CD4-positive, alpha-beta T cell (primary cell): ENCODE measurements at regions of chr3 and their contacts with region 1.

Region 1: GRCh38 chr3:36911990-36912804 is 32.7 kb downstream of the TRANK1 start:
- DNase-seq: peak in 8 of 14 experiments; percentile 14 to 80 (median 41)
- ATAC-seq: peak; percentile 82
- H3K4me3 ChIP-seq: peak overlapping the region; percentile 41
- H3K4me3 Mint-ChIP-seq: peak overlapping the region; percentile 40
- H3K27ac ChIP-seq: peak overlapping the region; percentile 42 to 67
- H3K27ac Mint-ChIP-seq: peak overlapping the region; percentile 73
- H3K4me1 ChIP-seq: peaks cover 29% of the 10 kb centered on the region
- H3K4me1 Mint-ChIP-seq: peaks cover 39% of the 10 kb centered on the region
- H3K27me3 ChIP-seq: no peaks in the 10 kb centered on the region
- H3K27me3 Mint-ChIP-seq: no peaks in the 10 kb centered on the region
- CTCF ChIP-seq: no peak

Region 2: GRCh38 chr3:35484929-35485530 is 1427.2 kb before region 1 on chr3:
- CTCF ChIA-PET with region 1: no interaction called
- POLR2A ChIA-PET with region 1: no interaction called
- intact Hi-C with region 1: no loop called
- DNase-seq: no peak
- ATAC-seq: no peak
- H3K4me3 ChIP-seq: no peak overlapping the region
- H3K4me3 Mint-ChIP-seq: no peak overlapping the region
- H3K27ac ChIP-seq: no peak overlapping the region
- H3K27ac Mint-ChIP-seq: no peak overlapping the region
- H3K4me1 ChIP-seq: no peaks in the 10 kb centered on the region
- H3K4me1 Mint-ChIP-seq: no peaks in the 10 kb centered on the region
- H3K27me3 ChIP-seq: no peaks in the 10 kb centered on the region
- H3K27me3 Mint-ChIP-seq: peaks cover 3% of the 10 kb centered on the region
- CTCF ChIP-seq: no peak

Region 3: DNA sequence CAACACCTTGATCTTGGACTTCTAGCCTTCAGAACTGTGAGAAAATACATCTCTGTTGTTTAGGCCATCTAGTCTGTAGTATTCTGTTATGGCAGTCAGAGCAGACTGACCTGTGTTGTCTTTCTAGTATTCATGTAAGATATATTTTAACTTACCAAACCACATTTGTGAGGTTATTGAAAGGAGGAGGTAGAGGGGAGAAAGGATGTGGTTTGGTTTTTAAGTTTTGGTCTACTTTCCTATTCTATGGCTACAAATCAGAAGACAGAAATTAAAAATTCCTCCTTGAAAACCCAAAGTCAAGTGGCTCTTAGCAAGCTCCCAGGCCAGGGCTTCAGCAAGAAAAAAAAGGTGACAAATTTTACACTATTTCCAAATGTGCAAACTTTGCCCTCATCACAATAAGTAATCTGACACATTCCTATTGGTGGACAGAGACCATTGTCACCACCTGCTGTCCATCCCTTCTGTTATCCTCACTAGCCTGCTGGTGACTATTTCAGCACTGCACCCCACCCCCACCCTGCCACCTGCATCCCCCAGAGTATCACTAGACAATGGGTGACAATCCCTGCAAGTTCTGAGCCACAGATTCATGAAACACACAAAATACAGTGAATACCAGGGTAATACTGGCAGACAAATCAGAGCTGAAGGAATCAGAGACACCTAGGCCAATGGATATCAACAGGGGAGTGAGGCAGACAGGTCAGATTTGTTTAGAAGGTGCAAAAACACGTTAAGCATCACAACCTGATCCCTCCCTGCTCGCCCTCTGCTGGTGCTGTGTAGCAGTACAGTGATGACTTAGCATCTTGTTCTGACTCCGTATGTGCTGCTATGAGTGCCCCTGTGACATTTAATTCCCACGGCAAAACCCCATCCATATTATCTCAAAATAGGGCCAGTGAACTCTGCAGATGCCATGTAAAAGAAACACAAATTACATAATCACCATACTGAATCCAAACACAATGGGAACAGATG is 68.8 kb before region 1 on chr3:
- CTCF ChIA-PET with region 1: no interaction called
- POLR2A ChIA-PET with region 1: no interaction called
- intact Hi-C with region 1: loop called in 1 of 2 experiments (anchors 10 kb)
- DNase-seq: peak in 13 of 14 experiments; percentile 11 to 67 (median 25)
- ATAC-seq: peak; percentile 89
- H3K4me3 ChIP-seq: no peak overlapping the region
- H3K4me3 Mint-ChIP-seq: no peak overlapping the region
- H3K27ac ChIP-seq: no peak overlapping the region
- H3K27ac Mint-ChIP-seq: peak overlapping the region; percentile 5
- H3K4me1 ChIP-seq: peaks cover 17% of the 10 kb centered on the region
- H3K4me1 Mint-ChIP-seq: peaks cover 41% of the 10 kb centered on the region
- H3K27me3 ChIP-seq: no peaks in the 10 kb centered on the region
- H3K27me3 Mint-ChIP-seq: no peaks in the 10 kb centered on the region
- CTCF ChIP-seq: peak; percentile 60

Region 4: DNA sequence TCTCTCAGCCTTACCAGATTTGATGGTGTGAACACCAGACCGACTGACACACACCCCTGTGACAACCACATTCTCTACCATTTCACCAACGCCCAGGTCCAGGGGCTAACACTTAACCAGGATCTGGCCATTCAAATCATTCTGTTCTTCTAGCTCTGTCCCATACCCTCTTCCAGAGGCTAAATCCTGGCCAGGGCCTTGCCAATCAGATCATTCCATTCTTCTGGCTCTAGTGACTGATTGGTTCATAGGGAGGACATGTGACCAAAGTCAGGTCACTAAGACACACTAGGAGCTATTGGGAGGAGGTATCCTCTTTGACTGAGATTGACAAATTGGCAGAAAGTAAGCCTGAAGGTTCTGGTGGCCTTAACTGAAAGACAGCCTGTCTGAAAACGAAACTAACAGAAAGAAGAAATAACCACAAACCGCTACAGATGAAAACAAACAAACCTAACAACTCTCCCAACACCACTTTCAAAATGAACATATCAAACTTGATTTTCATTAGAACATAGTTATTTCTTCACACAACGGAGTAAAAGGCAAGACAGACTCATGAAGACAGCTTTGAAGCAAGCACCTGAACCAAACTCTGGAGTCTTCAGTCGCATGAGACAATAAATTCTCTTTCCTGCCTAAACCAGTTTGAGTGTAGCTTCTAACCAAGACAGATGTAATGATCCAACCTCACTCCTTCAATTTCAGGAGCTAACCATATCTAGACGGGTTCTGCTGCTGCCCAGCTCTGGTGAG is 35.8 kb before region 1 on chr3:
- CTCF ChIA-PET with region 1: no interaction called
- POLR2A ChIA-PET with region 1: interaction called, 33 read pairs
- intact Hi-C with region 1: loop called in 1 of 2 experiments (anchors 2 kb)
- DNase-seq: peak in 6 of 14 experiments; percentile 6 to 90 (median 42)
- ATAC-seq: peak; percentile 92
- H3K4me3 ChIP-seq: peak overlapping the region; percentile 40
- H3K4me3 Mint-ChIP-seq: peak overlapping the region; percentile 69
- H3K27ac ChIP-seq: peak overlapping the region; percentile 77 to 80
- H3K27ac Mint-ChIP-seq: peak overlapping the region; percentile 96
- H3K4me1 ChIP-seq: peaks cover 23% of the 10 kb centered on the region
- H3K4me1 Mint-ChIP-seq: peaks cover 72% of the 10 kb centered on the region
- H3K27me3 ChIP-seq: no peaks in the 10 kb centered on the region
- H3K27me3 Mint-ChIP-seq: no peaks in the 10 kb centered on the region
- CTCF ChIP-seq: no peak

Region 5: GRCh38 chr3:36893137-36893557 is 19.1 kb before region 1 on chr3:
- CTCF ChIA-PET with region 1: interaction called, 3 read pairs
- POLR2A ChIA-PET with region 1: interaction called, 53 read pairs
- intact Hi-C with region 1: loop called in 1 of 2 experiments (anchors 1 kb)
- DNase-seq: peak in 11 of 14 experiments; percentile 28 to 85 (median 37)
- ATAC-seq: peak; percentile 99
- H3K4me3 ChIP-seq: no peak overlapping the region
- H3K4me3 Mint-ChIP-seq: peak overlapping the region; percentile 68
- H3K27ac ChIP-seq: peak overlapping the region; percentile 0 to 65
- H3K27ac Mint-ChIP-seq: peak overlapping the region; percentile 99
- H3K4me1 ChIP-seq: peaks cover 40% of the 10 kb centered on the region
- H3K4me1 Mint-ChIP-seq: peaks cover 72% of the 10 kb centered on the region
- H3K27me3 ChIP-seq: no peaks in the 10 kb centered on the region
- H3K27me3 Mint-ChIP-seq: no peaks in the 10 kb centered on the region
- CTCF ChIP-seq: no peak

Region 6: DNA sequence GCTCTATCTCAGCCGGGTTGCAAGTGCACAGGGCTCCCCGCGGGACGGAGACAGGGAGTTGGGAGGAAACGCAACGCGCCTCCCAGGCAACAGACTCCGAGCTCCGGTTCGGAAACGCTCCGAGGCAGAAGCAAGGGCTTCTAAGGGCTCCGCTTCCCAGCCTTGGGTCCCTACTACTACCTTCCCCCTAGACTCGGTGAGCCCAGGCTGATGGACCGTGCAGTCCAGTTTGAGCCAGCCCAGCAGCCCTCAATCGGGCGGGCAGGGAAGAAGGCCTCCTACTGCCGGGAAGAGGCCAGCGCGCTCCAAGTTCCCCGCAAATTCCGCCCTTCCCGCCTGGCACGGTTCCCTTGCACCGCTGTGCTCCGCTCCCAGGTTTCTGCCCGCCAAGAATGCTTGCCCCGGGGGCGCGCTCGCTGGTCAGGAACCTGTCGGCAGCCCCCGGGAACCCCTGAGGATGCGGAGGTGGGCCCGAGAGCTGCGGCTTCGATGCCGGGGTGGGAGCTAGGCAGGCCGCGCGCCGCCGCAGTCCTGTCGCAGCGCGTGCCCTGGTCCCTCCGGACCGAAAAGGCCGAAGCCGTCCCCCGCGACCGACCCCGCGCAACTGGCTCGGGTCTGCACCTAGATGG is 31.9 kb after region 1 on chr3:
- CTCF ChIA-PET with region 1: no interaction called
- POLR2A ChIA-PET with region 1: interaction called, 33 read pairs
- intact Hi-C with region 1: loop called (anchors 2 to 5 kb)
- DNase-seq: peak; percentile 2 to 55 (median 22)
- ATAC-seq: peak; percentile 35
- H3K4me3 ChIP-seq: peak overlapping the region; percentile 79
- H3K4me3 Mint-ChIP-seq: peak overlapping the region; percentile 89
- H3K27ac ChIP-seq: peak overlapping the region in 1 of 2 donors; percentile 61
- H3K27ac Mint-ChIP-seq: peak overlapping the region; percentile 73
- H3K4me1 ChIP-seq: peaks cover 22% of the 10 kb centered on the region
- H3K4me1 Mint-ChIP-seq: peaks cover 21% of the 10 kb centered on the region
- H3K27me3 ChIP-seq: no peaks in the 10 kb centered on the region
- H3K27me3 Mint-ChIP-seq: no peaks in the 10 kb centered on the region
- CTCF ChIP-seq: no peak